Brain microvascular endothelial cell (primary cell): ENCODE measurements at regions of chr13 and their contacts with region 1.

Region 1: GRCh38 chr13:31424117-31424729 is 224.4 kb downstream of the B3GLCT start:
- DNase-seq: peak; percentile 78
- H3K4me3 ChIP-seq: no peak overlapping the region
- H3K27ac ChIP-seq: no peak overlapping the region
- H3K27me3 ChIP-seq: no peaks in the 10 kb centered on the region
- CTCF ChIP-seq: peak; percentile 98

Region 2: DNA sequence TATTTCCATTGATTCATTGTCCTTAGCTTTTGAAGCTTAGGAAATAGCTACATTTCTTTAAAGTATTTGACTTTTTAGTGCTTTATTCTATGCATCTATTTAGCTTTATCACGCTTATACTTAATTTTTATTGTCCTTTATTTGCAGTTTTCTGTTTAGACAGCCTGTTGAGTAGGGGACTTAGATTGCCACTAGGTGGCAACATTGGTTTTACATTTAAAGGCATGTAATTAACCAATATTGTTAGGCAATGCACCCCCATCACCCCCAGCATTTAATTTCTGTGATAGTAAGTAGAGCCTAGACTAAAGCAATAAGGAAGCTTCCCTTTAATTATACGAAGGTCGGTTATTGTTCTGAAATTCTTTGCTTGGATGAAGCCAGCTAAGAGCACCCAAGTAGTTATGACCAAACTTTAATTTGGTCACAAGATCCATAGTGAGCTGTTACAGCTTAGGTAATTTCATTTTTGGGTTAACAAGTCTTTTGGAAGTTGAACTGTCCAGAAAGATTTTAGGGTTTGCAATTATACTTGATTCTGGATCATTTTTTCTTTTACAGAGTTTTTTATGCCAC is 187.9 kb before region 1 on chr13:
- in situ Hi-C with region 1: loop called (anchors 25 kb)
- DNase-seq: peak; percentile 42
- H3K4me3 ChIP-seq: no peak overlapping the region
- H3K27ac ChIP-seq: no peak overlapping the region
- H3K27me3 ChIP-seq: no peaks in the 10 kb centered on the region
- CTCF ChIP-seq: peak; percentile 62